PC-3 (cell line): ENCODE measurements at regions of chr17 and their contacts with region 1.

Region 1: DNA sequence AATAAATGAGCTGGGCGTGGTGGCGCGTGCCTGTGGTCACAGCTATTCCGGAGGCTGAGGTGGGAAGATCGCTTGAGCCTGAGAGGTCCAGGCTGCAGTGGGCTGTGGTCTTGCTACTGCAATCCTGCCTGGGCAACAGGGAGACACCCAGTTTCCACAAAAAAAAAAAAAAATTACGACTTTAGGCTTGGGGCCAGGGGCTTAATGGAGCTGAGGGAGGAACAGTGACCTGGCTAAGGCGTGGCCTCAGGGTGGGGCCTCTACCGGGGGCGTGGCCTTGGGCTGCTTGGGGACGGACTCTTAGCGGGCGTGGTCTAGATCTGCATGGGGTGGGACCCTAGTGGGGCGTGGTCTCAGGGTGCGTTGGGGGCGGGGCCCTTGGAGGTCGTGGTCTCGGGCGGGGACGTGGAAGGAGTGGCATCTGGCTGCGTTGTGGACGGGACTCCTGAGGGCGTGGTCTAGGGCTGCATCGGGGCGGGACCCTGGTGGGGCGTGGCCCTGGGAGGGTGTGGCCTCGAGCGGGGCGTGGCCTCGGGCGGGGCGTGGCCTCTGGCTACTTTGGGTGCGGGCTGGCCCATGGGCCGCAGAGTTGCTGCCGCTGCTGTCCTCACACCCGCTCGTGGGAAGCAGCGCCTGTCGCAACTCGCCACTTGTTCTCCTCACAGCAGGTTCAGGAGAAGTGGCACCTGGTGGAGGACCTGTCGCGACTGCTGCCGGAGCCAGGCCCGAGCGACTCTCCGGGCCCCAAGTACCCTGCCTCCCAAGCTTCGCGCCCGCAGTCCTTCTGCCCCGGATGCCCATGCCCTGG is 5.8 kb upstream of the C17orf99 start:
- DNase-seq: peak; percentile 100
- ATAC-seq: peak; percentile 76
- H3K4me3 ChIP-seq: peak overlapping the region; percentile 64
- H3K27ac ChIP-seq: peak overlapping the region; percentile 95
- H3K4me1 ChIP-seq: peaks cover 47% of the 10 kb centered on the region
- H3K27me3 ChIP-seq: no peaks in the 10 kb centered on the region
- CTCF ChIP-seq: no peak

Region 2: GRCh38 chr17:78040440-78041385 is 99.7 kb before region 1 on chr17:
- CTCF ChIA-PET with region 1: no interaction called
- POLR2A ChIA-PET with region 1: interaction called, 12 read pairs
- intact Hi-C with region 1: no loop called
- DNase-seq: peak; percentile 80
- ATAC-seq: peak; percentile 93
- H3K4me3 ChIP-seq: peak overlapping the region; percentile 71
- H3K27ac ChIP-seq: peak overlapping the region; percentile 72
- H3K4me1 ChIP-seq: peaks cover 17% of the 10 kb centered on the region
- H3K27me3 ChIP-seq: no peaks in the 10 kb centered on the region
- CTCF ChIP-seq: peak; percentile 41

Region 3: GRCh38 chr17:78154903-78155811 is 14.8 kb after region 1 on chr17:
- CTCF ChIA-PET with region 1: interaction called, 3 read pairs
- POLR2A ChIA-PET with region 1: no interaction called
- intact Hi-C with region 1: loop called (anchors 2 kb)
- DNase-seq: no peak
- ATAC-seq: no peak
- H3K4me3 ChIP-seq: no peak overlapping the region
- H3K27ac ChIP-seq: no peak overlapping the region
- H3K4me1 ChIP-seq: peaks cover 19% of the 10 kb centered on the region
- H3K27me3 ChIP-seq: no peaks in the 10 kb centered on the region
- CTCF ChIP-seq: no peak

Region 4: DNA sequence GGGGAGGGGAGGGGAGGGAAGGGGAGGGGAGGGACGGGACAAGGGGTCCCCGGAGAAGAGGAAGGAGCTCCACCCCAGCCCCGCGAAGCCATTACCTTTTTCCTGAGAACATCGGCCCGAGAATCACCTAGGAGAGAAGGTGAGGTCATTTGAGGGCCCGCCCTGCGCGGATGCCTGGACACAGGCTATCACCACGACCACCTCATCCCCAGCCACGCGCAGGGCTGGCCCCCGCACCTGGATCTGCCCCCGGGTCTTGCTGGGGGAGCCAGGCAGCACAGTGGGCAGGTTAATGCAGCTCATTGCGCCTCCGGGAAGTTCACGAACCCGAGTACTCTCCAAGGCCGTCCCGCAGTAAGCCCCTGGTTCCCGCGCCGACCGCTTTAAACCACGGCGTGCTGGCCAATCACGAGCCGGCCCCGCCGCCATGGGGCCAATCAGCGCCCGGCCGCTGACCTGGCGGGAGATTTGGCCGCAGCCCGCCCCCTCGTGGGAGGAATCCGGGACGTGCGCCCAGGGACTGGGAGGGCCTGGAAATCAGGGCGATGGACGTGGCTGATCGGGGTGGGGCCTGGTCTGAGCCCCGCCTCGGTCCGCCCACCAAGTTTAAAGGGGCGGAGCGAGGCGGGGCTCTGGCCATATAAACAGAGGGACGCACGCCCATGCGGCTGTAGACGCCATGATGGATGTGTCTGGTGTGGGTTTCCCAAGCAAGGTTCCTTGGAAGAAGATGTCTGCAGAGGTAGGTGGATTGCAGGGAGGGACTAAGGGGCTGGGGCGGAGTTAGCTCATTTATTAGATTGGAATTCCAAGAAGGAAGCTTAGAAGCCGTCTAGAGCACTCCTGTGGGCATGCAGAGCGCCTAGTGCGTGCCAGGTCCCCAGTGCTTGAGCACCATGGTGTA is 46.6 kb after region 1 on chr17 and contains the starts of genes AFMID and TK1:
- CTCF ChIA-PET with region 1: no interaction called
- POLR2A ChIA-PET with region 1: interaction called, 4 read pairs
- intact Hi-C with region 1: loop called (anchors 1 kb)
- DNase-seq: peak; percentile 100
- ATAC-seq: peak; percentile 90
- H3K4me3 ChIP-seq: peak within 1 kb of the TSS; percentile 77
- H3K27ac ChIP-seq: peak within 1 kb of the TSS; percentile 45
- H3K4me1 ChIP-seq: peaks cover 24% of the 10 kb centered on the region
- H3K27me3 ChIP-seq: no peaks in the 10 kb centered on the region
- CTCF ChIP-seq: peak; percentile 76
- total RNA-seq, gene AFMID: 53.1 and 58.9 TPM in 2 replicates
- total RNA-seq, gene TK1: 340 and 430 TPM in 2 replicates

Region 5: DNA sequence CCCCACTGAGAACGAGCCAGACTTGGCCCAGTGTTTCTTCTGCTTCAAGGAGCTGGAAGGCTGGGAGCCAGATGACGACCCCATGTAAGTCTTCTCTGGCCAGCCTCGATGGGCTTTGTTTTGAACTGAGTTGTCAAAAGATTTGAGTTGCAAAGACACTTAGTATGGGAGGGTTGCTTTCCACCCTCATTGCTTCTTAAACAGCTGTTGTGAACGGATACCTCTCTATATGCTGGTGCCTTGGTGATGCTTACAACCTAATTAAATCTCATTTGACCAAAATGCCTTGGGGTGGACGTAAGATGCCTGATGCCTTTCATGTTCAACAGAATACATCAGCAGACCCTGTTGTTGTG is 74.3 kb after region 1 on chr17:
- CTCF ChIA-PET with region 1: interaction called, 12 read pairs
- POLR2A ChIA-PET with region 1: interaction called, 5 read pairs
- intact Hi-C with region 1: no loop called
- DNase-seq: no peak
- ATAC-seq: peak; percentile 17
- H3K4me3 ChIP-seq: peak overlapping the region; percentile 100
- H3K27ac ChIP-seq: peak overlapping the region; percentile 72
- H3K4me1 ChIP-seq: peaks cover 13% of the 10 kb centered on the region
- H3K27me3 ChIP-seq: no peaks in the 10 kb centered on the region
- CTCF ChIP-seq: no peak